ENCODE measurements at regions of chr13 and their contacts with region 1.

Region 1: GRCh38 chr13:57716295-57716694 is 84.8 kb downstream of the PCDH17 start:
- DNase-seq: no peak
- ATAC-seq: no peak
- H3K4me3 ChIP-seq: no peak overlapping the region
- H3K27ac ChIP-seq: no peak overlapping the region
- H3K4me1 ChIP-seq: no peaks in the 10 kb centered on the region
- H3K27me3 ChIP-seq: no peaks in the 10 kb centered on the region
- CTCF ChIP-seq: peak; percentile 9; the same call in 1 of the 2 replicates

Region 2: DNA sequence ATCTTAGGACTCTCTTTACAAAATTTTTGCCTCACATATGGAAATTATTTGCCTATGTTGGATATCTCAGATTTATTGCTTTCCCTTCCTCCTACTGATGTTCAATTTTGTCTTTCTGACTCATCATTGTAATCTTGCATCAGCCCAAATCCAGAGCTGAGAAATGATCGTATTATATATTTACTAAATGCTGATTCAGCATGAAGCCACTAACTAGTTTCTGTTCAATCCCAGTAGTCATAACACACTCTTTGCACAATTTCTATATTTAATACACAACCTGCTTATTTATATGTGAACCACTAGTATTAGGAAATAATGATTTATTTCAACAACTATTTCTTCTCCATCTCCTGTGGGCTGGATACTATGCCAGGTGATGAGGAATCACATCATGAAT is 245.8 kb before region 1 on chr13:
- CTCF ChIA-PET with region 1: no interaction called
- POLR2A ChIA-PET with region 1: no interaction called
- in situ Hi-C with region 1: no loop called
- intact Hi-C with region 1: no loop called
- DNase-seq: no peak
- ATAC-seq: no peak
- H3K4me3 ChIP-seq: no peak overlapping the region
- H3K27ac ChIP-seq: no peak overlapping the region
- H3K4me1 ChIP-seq: no peaks in the 10 kb centered on the region
- H3K27me3 ChIP-seq: no peaks in the 10 kb centered on the region
- CTCF ChIP-seq: no peak

Region 3: GRCh38 chr13:57629821-57630235 is 86.5 kb before region 1 on chr13:
- CTCF ChIA-PET with region 1: no interaction called
- POLR2A ChIA-PET with region 1: no interaction called
- in situ Hi-C with region 1: no loop called
- intact Hi-C with region 1: loop called (anchors 10 kb)
- DNase-seq: no peak
- ATAC-seq: no peak
- H3K4me3 ChIP-seq: peak overlapping the region in 1 of 2 experiments; percentile 50; a peak in 1 of 4 replicates
- H3K27ac ChIP-seq: no peak overlapping the region
- H3K4me1 ChIP-seq: no peaks in the 10 kb centered on the region
- H3K27me3 ChIP-seq: peaks cover 3% of the 10 kb centered on the region; the same call in 1 of the 2 replicates
- CTCF ChIP-seq: no peak

Measured in Panc1 (cell line).